Aorta (tissue), 5 donors: ENCODE measurements at regions of chr6 and their contacts with region 1.

Region 1: DNA sequence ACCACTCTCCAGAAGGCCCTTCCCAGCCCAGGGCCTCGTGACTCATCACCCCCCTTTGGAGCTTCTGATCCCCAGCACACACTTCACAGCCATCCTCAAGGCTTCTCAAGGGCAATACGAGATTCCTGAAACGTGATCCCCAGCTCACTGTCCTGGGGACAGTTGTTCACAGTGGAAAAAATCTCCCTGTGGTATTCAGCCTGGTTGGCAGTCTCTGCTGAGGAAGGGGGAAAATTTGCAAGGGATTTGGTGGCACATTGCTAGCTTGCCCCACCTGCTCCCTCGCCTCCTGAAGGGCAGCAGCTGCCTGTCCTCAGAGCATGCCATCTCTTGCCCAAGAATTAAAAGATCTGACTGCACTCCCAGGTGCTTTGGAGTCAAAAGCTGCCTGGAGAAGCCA is 20.7 kb upstream of the PKHD1 start:
- DNase-seq: no peak
- ATAC-seq: no peak
- H3K4me3 ChIP-seq: no peak overlapping the region
- H3K27ac ChIP-seq: no peak overlapping the region
- H3K4me1 ChIP-seq: no peaks in the 10 kb centered on the region
- H3K27me3 ChIP-seq: no peaks in the 10 kb centered on the region

Region 2: DNA sequence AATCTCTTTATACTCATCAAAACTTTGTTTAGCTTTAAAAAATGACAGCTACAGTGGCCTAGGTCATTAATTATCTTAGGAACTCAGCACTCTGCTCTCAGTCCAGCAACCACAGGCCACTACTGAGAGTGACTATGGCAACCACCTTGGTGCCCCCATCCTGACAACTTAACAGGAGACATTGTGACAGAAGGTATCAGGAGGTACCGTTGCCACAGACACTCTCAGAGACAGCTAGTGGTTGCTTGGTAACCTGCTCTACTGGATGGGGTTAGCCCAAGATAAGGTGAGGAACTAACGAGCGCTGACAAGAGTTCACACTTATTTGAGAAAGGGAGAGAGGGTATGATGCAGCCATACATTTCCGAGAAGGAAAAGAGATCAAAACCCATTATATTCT is 1470.9 kb before region 1 on chr6:
- intact Hi-C with region 1: no loop called
- DNase-seq: no peak
- ATAC-seq: no peak
- H3K4me3 ChIP-seq: no peak overlapping the region
- H3K27ac ChIP-seq: no peak overlapping the region
- H3K4me1 ChIP-seq: no peaks in the 10 kb centered on the region
- H3K27me3 ChIP-seq: no peaks in the 10 kb centered on the region

Region 3: GRCh38 chr6:51562198-51562597 is 545.9 kb before region 1 on chr6:
- intact Hi-C with region 1: no loop called
- DNase-seq: no peak
- ATAC-seq: no peak
- H3K4me3 ChIP-seq: no peak overlapping the region
- H3K27ac ChIP-seq: no peak overlapping the region
- H3K4me1 ChIP-seq: no peaks in the 10 kb centered on the region
- H3K27me3 ChIP-seq: peaks cover 0 to 2% of the 10 kb centered on the region in 2 donors

Region 4: GRCh38 chr6:52227495-52227894 is 119.4 kb after region 1 on chr6:
- intact Hi-C with region 1: loop called (anchors 10 kb)
- DNase-seq: no peak
- ATAC-seq: no peak
- H3K4me3 ChIP-seq: no peak overlapping the region
- H3K27ac ChIP-seq: no peak overlapping the region
- H3K4me1 ChIP-seq: no peaks in the 10 kb centered on the region
- H3K27me3 ChIP-seq: peaks cover 0 to 2% of the 10 kb centered on the region in 2 donors

Region 5: DNA sequence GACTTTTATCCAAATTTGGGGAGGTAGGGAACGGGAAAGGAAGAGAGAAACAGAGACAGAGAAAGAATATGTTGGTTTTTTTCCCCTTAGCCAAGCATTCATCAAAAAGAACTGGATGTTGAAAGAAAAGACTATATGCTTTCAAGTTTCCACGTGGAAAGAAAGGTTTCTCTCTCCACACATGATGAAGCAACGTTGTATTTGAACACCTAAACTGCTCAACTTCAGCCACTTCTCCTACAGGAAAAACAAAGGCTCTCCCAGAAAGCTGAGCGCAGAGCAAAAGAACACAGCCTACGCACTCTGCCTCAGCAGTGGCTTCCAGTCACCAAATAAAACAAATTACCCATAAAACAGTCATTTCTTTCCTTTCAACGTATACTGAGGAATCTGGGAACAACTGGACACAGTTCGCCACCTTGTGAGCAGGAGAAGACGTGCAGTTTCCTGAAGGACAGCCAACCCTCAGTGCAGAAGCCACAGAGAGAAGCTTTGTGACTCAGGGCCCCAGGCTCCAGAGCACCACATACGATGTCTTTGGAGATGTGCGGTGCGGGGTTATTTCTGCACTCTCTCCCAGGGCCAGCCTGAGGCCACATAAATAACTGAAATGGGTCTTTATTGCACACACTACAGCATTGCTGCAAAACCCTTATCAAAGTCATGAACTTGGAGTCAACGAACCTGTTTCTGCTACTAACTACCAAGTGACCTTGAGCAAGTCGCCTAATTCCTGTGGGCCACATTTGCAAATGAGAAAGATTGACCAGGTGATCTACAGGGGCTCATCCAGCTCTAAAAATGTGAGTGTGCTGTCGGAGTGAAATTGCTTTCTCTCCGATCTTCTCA is 126.1 kb after region 1 on chr6:
- intact Hi-C with region 1: loop called (anchors 10 kb)
- DNase-seq: no peak
- ATAC-seq: peak; percentile 45
- H3K4me3 ChIP-seq: no peak overlapping the region
- H3K27ac ChIP-seq: no peak overlapping the region
- H3K4me1 ChIP-seq: no peaks in the 10 kb centered on the region
- H3K27me3 ChIP-seq: peaks cover 0 to 2% of the 10 kb centered on the region in 2 donors

Region 6: DNA sequence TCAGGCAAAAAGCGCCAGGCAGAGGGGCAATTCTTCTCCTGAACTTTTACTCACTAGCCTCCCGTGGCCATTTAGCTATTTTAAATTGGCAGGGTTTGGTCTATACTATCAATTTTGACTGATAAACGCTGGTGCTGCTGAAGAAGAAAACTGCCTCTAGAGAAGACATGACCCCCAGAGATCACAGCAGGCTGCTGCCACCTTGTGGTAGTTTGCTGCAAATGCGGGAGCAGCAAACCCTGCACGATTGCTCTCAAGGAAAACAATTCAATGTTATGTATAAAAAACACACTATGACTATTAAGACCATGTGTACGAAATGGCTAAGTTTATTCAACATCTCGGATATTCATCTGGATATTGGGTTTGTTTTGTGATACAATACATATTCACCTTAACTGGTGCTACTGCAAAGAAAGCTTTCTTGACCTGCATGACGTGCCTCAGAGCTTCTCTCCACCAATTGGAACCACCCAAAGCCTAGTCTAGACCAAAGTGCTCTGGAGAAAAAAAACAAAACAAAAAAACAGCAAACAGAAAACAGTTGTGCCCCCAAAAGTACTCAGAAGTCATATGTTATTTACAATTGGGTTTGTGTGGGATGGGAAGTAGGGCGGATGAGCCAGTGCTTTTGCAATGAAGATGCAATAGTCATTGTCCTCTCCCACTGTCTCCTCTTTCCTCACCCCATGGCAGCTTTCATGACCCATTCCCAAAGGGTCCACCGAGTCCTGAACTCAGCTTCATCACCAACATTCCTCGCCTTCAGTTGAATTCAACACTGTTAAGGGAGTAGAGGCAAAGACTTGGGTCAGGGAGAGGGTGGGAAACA is 155.8 kb after region 1 on chr6:
- intact Hi-C with region 1: loop called in 1 of 2 experiments (anchors 5 kb)
- DNase-seq: peak; percentile 66 to 85
- ATAC-seq: peak; percentile 75
- H3K4me3 ChIP-seq: no peak overlapping the region
- H3K27ac ChIP-seq: no peak overlapping the region
- H3K4me1 ChIP-seq: no peaks in the 10 kb centered on the region
- H3K27me3 ChIP-seq: no peaks in the 10 kb centered on the region